ENCODE measurements at regions of chr1 and their contacts with region 1.

Region 1: GRCh38 chr1:175319418-175320230 is 127.0 kb upstream of the KIAA0040 start:
- DNase-seq: peak; percentile 84
- H3K4me3 ChIP-seq: no peak overlapping the region
- H3K27ac ChIP-seq: no peak overlapping the region
- H3K4me1 ChIP-seq: peaks cover 11% of the 10 kb centered on the region
- H3K27me3 ChIP-seq: no peaks in the 10 kb centered on the region
- CTCF ChIP-seq: peak; percentile 78 to 86 (median 81)
- POLR2A ChIP-seq: no peak

Region 2: GRCh38 chr1:175154629-175155472 is 164.8 kb before region 1 on chr1:
- intact Hi-C with region 1: loop called (anchors 5 kb)
- DNase-seq: peak; percentile 76
- H3K4me3 ChIP-seq: no peak overlapping the region
- H3K27ac ChIP-seq: no peak overlapping the region
- H3K4me1 ChIP-seq: peaks cover 3% of the 10 kb centered on the region
- H3K27me3 ChIP-seq: no peaks in the 10 kb centered on the region
- CTCF ChIP-seq: peak; percentile 88 to 95 (median 88)
- POLR2A ChIP-seq: no peak

Region 3: GRCh38 chr1:175221666-175222175 is 97.9 kb before region 1 on chr1:
- intact Hi-C with region 1: no loop called
- DNase-seq: peak; percentile 30
- H3K4me3 ChIP-seq: no peak overlapping the region
- H3K27ac ChIP-seq: no peak overlapping the region
- H3K4me1 ChIP-seq: no peaks in the 10 kb centered on the region
- H3K27me3 ChIP-seq: no peaks in the 10 kb centered on the region
- CTCF ChIP-seq: no peak
- POLR2A ChIP-seq: no peak

Measured in testis (tissue), 5 donors.